ENCODE measurements at regions of chr6 and their contacts with region 1.

Region 1: DNA sequence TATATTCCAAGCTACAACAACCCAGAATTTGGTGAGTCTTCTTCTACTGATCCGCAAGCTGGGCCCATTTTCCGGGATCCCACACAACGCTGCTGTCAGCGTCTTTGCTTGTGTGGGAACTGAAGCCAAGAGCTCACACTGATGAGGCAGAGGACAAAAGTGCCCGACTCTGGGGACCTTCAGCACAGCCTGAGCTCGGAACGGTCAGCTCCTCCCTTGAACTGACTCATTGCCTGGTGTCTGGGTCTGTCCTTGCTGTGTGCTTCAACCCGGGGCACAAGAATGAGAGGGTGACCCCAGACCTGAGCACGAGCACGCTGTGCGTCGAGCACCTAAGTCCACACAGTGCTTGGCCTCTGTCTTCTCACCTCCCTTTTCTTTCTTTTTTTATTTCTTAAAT is 33.5 kb downstream of the DACT2 start:
- DNase-seq: no peak
- H3K4me3 Mint-ChIP-seq: no peak overlapping the region
- H3K27ac Mint-ChIP-seq: no peak overlapping the region
- H3K4me1 Mint-ChIP-seq: peaks cover 25% of the 10 kb centered on the region
- H3K27me3 Mint-ChIP-seq: peaks cover 28% of the 10 kb centered on the region

Region 2: GRCh38 chr6:168352111-168352510 is 66.0 kb after region 1 on chr6:
- CTCF ChIA-PET with region 1: no interaction called
- POLR2A ChIA-PET with region 1: no interaction called
- intact Hi-C with region 1: loop called (anchors 5 kb)
- DNase-seq: no peak
- H3K4me3 Mint-ChIP-seq: no peak overlapping the region
- H3K27ac Mint-ChIP-seq: no peak overlapping the region
- H3K4me1 Mint-ChIP-seq: peaks cover 5% of the 10 kb centered on the region
- H3K27me3 Mint-ChIP-seq: peaks cover 12% of the 10 kb centered on the region